Right ventricle myocardium superior (tissue), 1 donor: ENCODE measurements at regions of chr2 and their contacts with region 1.

Region 1: DNA sequence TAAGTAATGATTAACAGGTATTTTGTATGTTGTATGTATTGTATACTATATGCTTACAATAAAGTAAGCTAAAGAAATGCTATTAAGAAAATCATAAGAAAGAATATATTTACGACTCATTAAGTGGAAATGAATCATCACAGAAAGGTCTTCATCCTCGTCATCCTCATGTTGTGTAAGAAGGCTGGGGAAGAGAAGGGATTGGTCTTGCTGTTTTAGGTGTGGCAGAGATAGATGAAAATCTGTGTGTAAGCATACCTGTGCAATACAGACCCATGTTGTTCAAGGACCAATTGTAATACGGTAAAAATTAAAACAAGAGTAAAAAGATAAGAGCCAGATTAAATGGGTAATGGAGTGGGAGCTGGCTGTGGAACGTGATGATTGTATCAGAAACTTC is 16.6 kb downstream of the SLC35F5 start:
- DNase-seq: no peak
- ATAC-seq: no peak

Region 2: DNA sequence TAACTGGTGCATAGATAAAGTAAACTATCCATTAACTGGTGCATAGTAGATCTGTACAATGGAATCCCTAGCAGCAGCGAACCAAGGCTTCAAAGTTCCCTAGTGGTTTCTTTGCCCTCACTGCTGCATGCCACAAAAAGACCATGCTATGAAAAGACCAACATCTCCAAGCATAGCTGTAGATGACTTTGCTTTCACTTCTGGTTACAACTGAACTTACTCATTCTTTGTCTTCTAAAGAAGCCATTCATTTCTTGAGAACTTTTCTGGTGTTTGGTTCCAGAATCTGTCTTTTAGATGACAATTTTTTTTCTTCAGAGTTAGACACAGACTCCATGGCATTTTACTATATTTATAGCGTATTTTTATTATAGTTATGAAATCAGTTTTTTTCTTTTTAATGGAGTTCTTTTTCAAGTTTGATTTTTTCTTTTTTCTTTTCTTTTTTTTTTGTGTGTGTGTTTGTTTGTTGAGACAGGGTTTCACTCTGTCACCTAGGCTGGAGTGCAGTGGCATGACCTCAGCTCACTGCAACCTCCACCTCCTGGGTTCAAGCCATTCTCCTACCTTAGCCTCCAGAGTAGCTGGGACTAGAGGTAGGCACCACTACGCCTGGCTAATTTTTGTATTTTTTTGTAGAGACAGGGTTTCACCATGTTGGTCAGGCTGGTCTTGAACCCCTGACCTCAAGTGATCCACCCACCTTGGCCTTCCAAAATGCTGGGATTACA is 47.0 kb before region 1 on chr2:
- intact Hi-C with region 1: no loop called
- DNase-seq: no peak
- ATAC-seq: no peak

Region 3: GRCh38 chr2:113831161-113831560 is 91.3 kb after region 1 on chr2:
- intact Hi-C with region 1: no loop called
- DNase-seq: no peak
- ATAC-seq: no peak

Region 4: GRCh38 chr2:113959202-113959601 is 219.4 kb after region 1 on chr2:
- intact Hi-C with region 1: loop called (anchors 10 kb)
- DNase-seq: no peak
- ATAC-seq: no peak

Region 5: GRCh38 chr2:113996671-113997594 is 257.1 kb after region 1 on chr2:
- intact Hi-C with region 1: no loop called
- DNase-seq: no peak
- ATAC-seq: no peak